CD4-positive, alpha-beta memory T cell (primary cell): ENCODE measurements at regions of chr1 and their contacts with region 1.

Region 1: DNA sequence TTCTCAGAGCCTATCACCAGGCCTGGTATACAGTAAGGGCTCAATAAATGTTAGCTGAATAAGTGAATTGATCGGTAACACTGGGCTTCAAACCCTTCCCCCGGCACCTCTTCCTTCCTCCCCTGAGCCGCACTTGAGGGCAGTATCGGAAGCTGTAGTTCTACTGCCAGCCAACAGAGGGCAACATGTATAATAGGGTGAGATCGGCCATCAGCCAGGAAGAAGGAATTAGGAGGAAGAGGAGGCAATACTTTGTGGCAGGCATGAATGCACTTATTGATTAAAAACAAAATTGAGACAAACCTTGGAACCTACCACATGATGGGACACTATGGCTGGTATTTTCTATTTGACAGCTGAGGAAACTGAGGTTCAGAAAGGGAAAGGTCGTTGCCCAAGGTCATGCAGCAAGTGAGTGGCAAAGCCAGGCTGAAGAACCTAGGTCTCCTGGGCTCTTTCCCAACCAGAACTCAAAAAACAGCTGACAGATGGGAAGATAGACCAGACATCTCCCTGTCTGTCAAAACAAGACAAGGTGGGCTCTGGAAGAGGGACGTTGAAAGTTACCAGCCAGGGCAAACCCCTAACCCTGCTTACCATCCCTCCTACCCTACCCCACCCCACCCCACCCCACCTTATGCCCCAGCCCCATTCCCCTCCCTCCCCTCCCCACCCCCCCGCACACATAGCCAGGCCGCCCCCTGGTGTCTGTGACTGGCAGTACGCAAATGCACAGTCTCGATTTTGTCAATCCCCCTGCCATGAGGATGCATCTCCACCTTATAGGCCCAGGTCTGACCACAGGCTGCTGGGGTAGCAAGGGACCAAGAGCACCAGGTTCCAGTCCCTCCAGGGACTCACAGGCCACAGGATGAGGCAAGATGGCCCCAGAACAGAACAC is 107.3 kb upstream of the RUNX3 start:
- DNase-seq: peak; percentile 64 to 70 (median 65)
- H3K4me3 ChIP-seq: no peak overlapping the region
- H3K4me3 Mint-ChIP-seq: peak overlapping the region in 7 of 8 donors; percentile 4 to 61 (median 43)
- H3K27ac ChIP-seq: no peak overlapping the region
- H3K27ac Mint-ChIP-seq: peak overlapping the region; percentile 22 to 91 (median 74)
- H3K4me1 ChIP-seq: peaks cover 56% of the 10 kb centered on the region
- H3K4me1 Mint-ChIP-seq: peaks cover 9 to 26% (median 21%) of the 10 kb centered on the region in 4 donors
- H3K27me3 ChIP-seq: no peaks in the 10 kb centered on the region
- H3K27me3 Mint-ChIP-seq: peaks cover 0 to 1% of the 10 kb centered on the region in 2 donors

Region 2: GRCh38 chr1:24909388-24909898 is 128.0 kb before region 1 on chr1:
- CTCF ChIA-PET with region 1: interaction called, 11 read pairs
- POLR2A ChIA-PET with region 1: interaction called, 6 read pairs
- intact Hi-C with region 1: no loop called
- DNase-seq: peak in 1 of 5 donors; percentile 37
- H3K4me3 ChIP-seq: no peak overlapping the region
- H3K4me3 Mint-ChIP-seq: peak overlapping the region in 2 of 8 donors; percentile 26 to 52
- H3K27ac ChIP-seq: peak overlapping the region; percentile 77
- H3K27ac Mint-ChIP-seq: peak overlapping the region; percentile 85 to 100 (median 95)
- H3K4me1 ChIP-seq: peaks cover 68% of the 10 kb centered on the region
- H3K4me1 Mint-ChIP-seq: peaks cover 35 to 72% (median 51%) of the 10 kb centered on the region in 4 donors
- H3K27me3 ChIP-seq: no peaks in the 10 kb centered on the region
- H3K27me3 Mint-ChIP-seq: no peaks in the 10 kb centered on the region

Region 3: DNA sequence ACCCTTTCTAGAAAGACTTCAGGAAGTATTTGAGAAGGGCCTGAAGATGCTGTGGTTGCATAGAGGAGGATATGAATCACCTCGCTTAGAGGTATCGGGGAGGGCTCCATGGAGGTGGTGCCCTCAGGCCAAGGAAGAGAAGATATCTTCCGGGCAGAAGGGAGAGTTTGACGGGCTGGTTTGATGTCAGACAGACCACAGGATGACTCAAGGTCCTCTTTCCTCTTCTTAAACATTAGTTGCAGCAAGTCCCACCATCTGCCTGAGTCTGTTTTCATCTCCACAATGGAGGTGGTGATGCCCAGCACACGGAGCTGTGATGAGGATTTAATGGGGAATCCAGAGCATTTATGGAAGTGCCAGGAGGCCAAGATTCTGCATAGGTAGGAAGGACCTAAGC is 82.3 kb before region 1 on chr1:
- CTCF ChIA-PET with region 1: interaction called, 155 read pairs
- POLR2A ChIA-PET with region 1: interaction called, 5 read pairs
- intact Hi-C with region 1: loop called (anchors 2 kb)
- DNase-seq: peak; percentile 33 to 89 (median 52)
- H3K4me3 ChIP-seq: no peak overlapping the region
- H3K4me3 Mint-ChIP-seq: peak overlapping the region in 6 of 8 donors; percentile 47 to 79 (median 70)
- H3K27ac ChIP-seq: peak overlapping the region; percentile 15
- H3K27ac Mint-ChIP-seq: peak overlapping the region; percentile 83 to 94 (median 93)
- H3K4me1 ChIP-seq: peaks cover 58% of the 10 kb centered on the region
- H3K4me1 Mint-ChIP-seq: peaks cover 28 to 71% (median 56%) of the 10 kb centered on the region in 4 donors
- H3K27me3 ChIP-seq: no peaks in the 10 kb centered on the region
- H3K27me3 Mint-ChIP-seq: no peaks in the 10 kb centered on the region

Region 4: DNA sequence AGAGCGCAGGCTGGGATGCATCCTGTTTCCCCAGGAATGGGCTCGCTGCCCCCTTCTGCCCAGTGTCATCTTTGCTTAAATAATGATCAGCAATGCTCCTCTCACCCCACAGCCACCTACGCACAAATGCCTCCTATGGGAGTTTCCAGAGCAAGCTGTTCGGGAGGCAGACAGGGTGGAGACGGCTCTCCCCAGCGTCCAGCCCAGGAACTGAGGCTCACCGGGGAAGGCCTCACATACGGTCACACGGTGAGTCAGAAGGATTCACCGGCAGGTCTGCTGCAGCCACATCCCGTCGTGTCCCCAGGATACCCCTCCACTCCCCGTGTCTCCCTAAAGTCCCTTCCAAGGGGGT is 67.0 kb before region 1 on chr1:
- CTCF ChIA-PET with region 1: interaction called, 155 read pairs
- POLR2A ChIA-PET with region 1: interaction called, 36 read pairs
- intact Hi-C with region 1: no loop called
- DNase-seq: no peak
- H3K4me3 ChIP-seq: no peak overlapping the region
- H3K4me3 Mint-ChIP-seq: no peak overlapping the region
- H3K27ac ChIP-seq: no peak overlapping the region
- H3K27ac Mint-ChIP-seq: peak overlapping the region in 2 of 7 donors; percentile 70 to 84
- H3K4me1 ChIP-seq: peaks cover 32% of the 10 kb centered on the region
- H3K4me1 Mint-ChIP-seq: peaks cover 18 to 55% (median 32%) of the 10 kb centered on the region in 4 donors
- H3K27me3 ChIP-seq: no peaks in the 10 kb centered on the region
- H3K27me3 Mint-ChIP-seq: no peaks in the 10 kb centered on the region

Region 5: GRCh38 chr1:24996983-24997893 is 40.2 kb before region 1 on chr1:
- CTCF ChIA-PET with region 1: interaction called, 28 read pairs
- POLR2A ChIA-PET with region 1: interaction called, 18 read pairs
- intact Hi-C with region 1: loop called (anchors 1 kb)
- DNase-seq: no peak
- H3K4me3 ChIP-seq: no peak overlapping the region
- H3K4me3 Mint-ChIP-seq: peak overlapping the region in 4 of 8 donors; percentile 24 to 53 (median 40)
- H3K27ac ChIP-seq: no peak overlapping the region
- H3K27ac Mint-ChIP-seq: peak overlapping the region in 5 of 7 donors; percentile 36 to 90 (median 77)
- H3K4me1 ChIP-seq: peaks cover 57% of the 10 kb centered on the region
- H3K4me1 Mint-ChIP-seq: peaks cover 31 to 86% (median 52%) of the 10 kb centered on the region in 4 donors
- H3K27me3 ChIP-seq: no peaks in the 10 kb centered on the region
- H3K27me3 Mint-ChIP-seq: no peaks in the 10 kb centered on the region

Region 6: DNA sequence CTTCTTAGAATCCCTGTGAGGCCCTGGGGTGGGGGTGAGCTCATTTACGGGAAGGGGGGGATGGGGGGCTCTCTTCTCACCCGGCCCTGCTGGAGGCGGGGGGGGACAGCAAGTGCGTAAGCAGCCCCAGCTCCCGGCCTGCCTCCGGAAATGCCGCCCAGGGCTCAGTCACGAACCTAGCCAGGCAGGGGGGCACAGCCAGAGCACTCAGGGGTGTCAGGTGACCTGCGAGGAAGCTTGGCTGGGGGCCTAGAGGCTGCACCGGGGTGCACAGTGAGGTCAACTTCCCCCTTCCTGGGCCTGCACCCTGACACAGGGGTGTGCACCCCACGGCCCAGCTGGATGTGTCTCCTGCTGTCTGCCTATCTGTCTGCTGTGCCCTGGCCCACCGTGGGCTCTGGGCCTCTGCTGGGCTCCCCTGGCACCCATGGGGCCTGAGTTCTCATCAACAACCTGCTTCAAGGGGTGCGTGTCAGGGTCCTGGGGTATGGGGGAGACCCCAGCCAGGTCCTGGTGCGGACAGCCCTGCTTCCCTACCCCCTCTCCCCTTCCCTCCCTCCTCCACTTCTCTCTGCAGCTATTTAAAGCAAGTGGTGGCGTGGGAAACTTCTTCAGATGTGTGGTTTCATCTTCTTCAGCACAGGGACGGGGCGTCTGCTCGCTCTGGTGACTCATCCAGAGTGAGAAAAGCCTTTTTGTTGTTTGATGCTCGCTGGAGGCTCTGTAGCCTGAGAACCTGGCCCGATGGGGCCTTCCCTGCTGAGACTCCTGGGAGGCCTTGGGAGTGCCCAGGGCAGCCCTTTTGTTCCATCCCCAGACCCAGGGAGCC is 14.8 kb before region 1 on chr1:
- CTCF ChIA-PET with region 1: interaction called, 58 read pairs
- POLR2A ChIA-PET with region 1: interaction called, 131 read pairs
- intact Hi-C with region 1: loop called (anchors 1 kb)
- DNase-seq: peak; percentile 90 to 99 (median 94)
- H3K4me3 ChIP-seq: peak overlapping the region; percentile 14 to 20
- H3K4me3 Mint-ChIP-seq: peak overlapping the region; percentile 35 to 89 (median 70)
- H3K27ac ChIP-seq: peak overlapping the region; percentile 99
- H3K27ac Mint-ChIP-seq: peak overlapping the region; percentile 95 to 99 (median 97)
- H3K4me1 ChIP-seq: peaks cover 74% of the 10 kb centered on the region
- H3K4me1 Mint-ChIP-seq: peaks cover 27 to 76% (median 49%) of the 10 kb centered on the region in 4 donors
- H3K27me3 ChIP-seq: no peaks in the 10 kb centered on the region
- H3K27me3 Mint-ChIP-seq: no peaks in the 10 kb centered on the region

Region 7: GRCh38 chr1:25099343-25099951 is 62.0 kb after region 1 on chr1:
- CTCF ChIA-PET with region 1: interaction called, 37 read pairs
- POLR2A ChIA-PET with region 1: interaction called, 5 read pairs
- intact Hi-C with region 1: loop called (anchors 2 kb)
- DNase-seq: peak in 2 of 5 donors; percentile 17 to 19
- H3K4me3 ChIP-seq: no peak overlapping the region
- H3K4me3 Mint-ChIP-seq: peak overlapping the region in 6 of 8 donors; percentile 38 to 88 (median 72)
- H3K27ac ChIP-seq: no peak overlapping the region
- H3K27ac Mint-ChIP-seq: peak overlapping the region; percentile 9 to 91 (median 47)
- H3K4me1 ChIP-seq: peaks cover 60% of the 10 kb centered on the region
- H3K4me1 Mint-ChIP-seq: peaks cover 42 to 70% (median 55%) of the 10 kb centered on the region in 4 donors
- H3K27me3 ChIP-seq: no peaks in the 10 kb centered on the region
- H3K27me3 Mint-ChIP-seq: no peaks in the 10 kb centered on the region